ENCODE measurements at regions of chr2 and their contacts with region 1.

Region 1: DNA sequence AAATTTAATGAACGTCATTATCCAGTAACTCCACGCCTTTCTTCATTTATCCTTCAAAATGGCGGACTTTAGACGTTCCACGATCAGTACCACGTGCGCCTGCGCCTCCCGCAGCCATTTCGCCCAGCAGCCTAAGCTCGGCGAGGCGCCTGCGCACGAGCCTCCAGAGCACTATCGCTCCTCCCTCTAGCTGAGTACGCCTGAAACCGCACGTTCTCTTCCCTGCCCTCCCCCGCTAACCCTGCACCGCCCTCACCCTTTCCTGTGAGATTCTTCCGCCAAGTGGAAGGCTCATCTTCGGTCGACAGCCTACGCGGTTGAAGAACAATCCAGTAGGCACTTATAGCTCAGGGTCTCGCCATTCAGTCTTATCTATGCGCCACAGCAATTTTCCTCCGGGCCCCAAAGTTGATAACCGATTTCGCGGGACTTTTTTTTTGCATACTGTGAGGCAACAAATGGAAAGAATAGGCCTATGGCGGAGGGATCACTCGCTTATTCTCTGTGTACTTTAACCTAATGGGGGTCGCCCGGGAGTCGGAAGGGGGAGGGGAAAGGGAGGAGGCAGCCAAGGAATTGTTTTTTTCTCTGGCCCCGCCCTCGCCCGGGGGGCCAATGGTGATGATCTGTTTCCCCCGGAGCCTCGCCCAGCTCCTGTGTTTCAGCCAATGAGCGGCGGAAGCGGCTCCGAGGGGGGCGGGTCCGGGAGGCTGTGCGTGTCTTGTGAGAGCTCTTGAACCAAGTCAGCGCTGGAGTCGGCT is at the start of gene KDM3A:
- DNase-seq: peak; percentile 99
- ATAC-seq: peak; percentile 81
- H3K4me3 ChIP-seq: peak within 1 kb of the TSS; percentile 81 to 98 (median 84)
- H3K4me3 Mint-ChIP-seq: peak within 1 kb of the TSS; percentile 97
- H3K27ac ChIP-seq: peak within 1 kb of the TSS; percentile 89 to 92
- H3K27ac Mint-ChIP-seq: peak within 1 kb of the TSS; percentile 99
- H3K4me1 ChIP-seq: peaks cover 23 to 26% of the 10 kb centered on the region in 2 donors
- H3K4me1 Mint-ChIP-seq: peaks cover 41% of the 10 kb centered on the region
- H3K27me3 ChIP-seq: peaks cover 0 to 3% (median 0%) of the 10 kb centered on the region in 4 experiments
- H3K27me3 Mint-ChIP-seq: peaks cover 7% of the 10 kb centered on the region
- CTCF ChIP-seq: no peak
- total RNA-seq, gene KDM3A: 99.2 and 107 TPM in 2 replicates

Region 2: DNA sequence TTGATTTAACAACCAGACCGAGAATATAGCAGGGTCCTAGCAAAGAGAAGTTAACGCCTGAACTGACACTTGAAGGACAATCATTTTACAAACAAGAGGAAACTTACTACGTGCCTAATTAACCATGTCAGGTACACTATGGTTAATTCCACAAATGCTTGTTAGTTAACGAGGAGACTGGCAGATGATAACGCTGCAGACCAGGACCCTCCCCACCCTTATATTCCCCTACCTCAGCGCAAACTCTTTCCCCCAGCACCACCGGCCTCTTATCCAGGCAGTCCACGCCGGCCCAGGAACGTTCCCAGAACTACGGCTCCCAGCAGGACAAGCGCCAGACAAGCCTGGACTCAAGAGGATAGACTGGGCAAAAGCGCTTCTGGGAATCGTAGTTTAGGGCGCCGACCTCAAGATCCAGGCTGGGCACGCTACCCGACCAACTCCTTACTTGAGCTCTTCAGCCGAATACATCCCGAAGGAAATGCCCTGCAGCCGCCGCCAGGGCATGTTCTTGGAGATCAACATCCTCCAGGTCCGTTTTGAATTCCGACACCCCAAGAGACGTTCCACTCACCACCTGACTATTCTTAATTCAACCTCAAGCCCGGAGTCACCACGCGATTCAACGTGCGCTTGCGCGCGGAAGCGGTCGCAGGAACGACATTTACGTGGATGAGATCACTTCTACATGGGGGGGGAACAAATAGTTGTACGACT is 335.4 kb before region 1 on chr2 and contains the start of gene POLR1A:
- CTCF ChIA-PET with region 1: interaction called, 4 read pairs
- POLR2A ChIA-PET with region 1: interaction called, 5 read pairs
- intact Hi-C with region 1: loop called (anchors 2 kb)
- DNase-seq: peak; percentile 95
- ATAC-seq: peak; percentile 76
- H3K4me3 ChIP-seq: peak within 1 kb of the TSS; percentile 88 to 96 (median 89)
- H3K4me3 Mint-ChIP-seq: peak within 1 kb of the TSS; percentile 93
- H3K27ac ChIP-seq: peak within 1 kb of the TSS; percentile 74 to 92
- H3K27ac Mint-ChIP-seq: peak within 1 kb of the TSS; percentile 95
- H3K4me1 ChIP-seq: peaks cover 16 to 22% of the 10 kb centered on the region in 2 donors
- H3K4me1 Mint-ChIP-seq: peaks cover 50% of the 10 kb centered on the region
- H3K27me3 ChIP-seq: no peaks in the 10 kb centered on the region
- H3K27me3 Mint-ChIP-seq: no peaks in the 10 kb centered on the region
- CTCF ChIP-seq: no peak
- total RNA-seq, gene POLR1A: 32.7 and 36.8 TPM in 2 replicates

Region 3: GRCh38 chr2:86195055-86195807 is 245.6 kb before region 1 on chr2 and contains the start of gene IMMT:
- CTCF ChIA-PET with region 1: interaction called, 3 read pairs
- POLR2A ChIA-PET with region 1: interaction called, 3 read pairs
- intact Hi-C with region 1: loop called (anchors 2 kb)
- DNase-seq: peak; percentile 94
- ATAC-seq: peak; percentile 90
- H3K4me3 ChIP-seq: peak within 1 kb of the TSS; percentile 76 to 99 (median 91)
- H3K4me3 Mint-ChIP-seq: peak within 1 kb of the TSS; percentile 94
- H3K27ac ChIP-seq: peak within 1 kb of the TSS; percentile 90 to 94
- H3K27ac Mint-ChIP-seq: peak within 1 kb of the TSS; percentile 89
- H3K4me1 ChIP-seq: peaks cover 25 to 28% of the 10 kb centered on the region in 2 donors
- H3K4me1 Mint-ChIP-seq: peaks cover 49% of the 10 kb centered on the region
- H3K27me3 ChIP-seq: no peaks in the 10 kb centered on the region
- H3K27me3 Mint-ChIP-seq: no peaks in the 10 kb centered on the region
- CTCF ChIP-seq: no peak
- total RNA-seq, gene IMMT: 63.5 and 66.0 TPM in 2 replicates

Region 4: DNA sequence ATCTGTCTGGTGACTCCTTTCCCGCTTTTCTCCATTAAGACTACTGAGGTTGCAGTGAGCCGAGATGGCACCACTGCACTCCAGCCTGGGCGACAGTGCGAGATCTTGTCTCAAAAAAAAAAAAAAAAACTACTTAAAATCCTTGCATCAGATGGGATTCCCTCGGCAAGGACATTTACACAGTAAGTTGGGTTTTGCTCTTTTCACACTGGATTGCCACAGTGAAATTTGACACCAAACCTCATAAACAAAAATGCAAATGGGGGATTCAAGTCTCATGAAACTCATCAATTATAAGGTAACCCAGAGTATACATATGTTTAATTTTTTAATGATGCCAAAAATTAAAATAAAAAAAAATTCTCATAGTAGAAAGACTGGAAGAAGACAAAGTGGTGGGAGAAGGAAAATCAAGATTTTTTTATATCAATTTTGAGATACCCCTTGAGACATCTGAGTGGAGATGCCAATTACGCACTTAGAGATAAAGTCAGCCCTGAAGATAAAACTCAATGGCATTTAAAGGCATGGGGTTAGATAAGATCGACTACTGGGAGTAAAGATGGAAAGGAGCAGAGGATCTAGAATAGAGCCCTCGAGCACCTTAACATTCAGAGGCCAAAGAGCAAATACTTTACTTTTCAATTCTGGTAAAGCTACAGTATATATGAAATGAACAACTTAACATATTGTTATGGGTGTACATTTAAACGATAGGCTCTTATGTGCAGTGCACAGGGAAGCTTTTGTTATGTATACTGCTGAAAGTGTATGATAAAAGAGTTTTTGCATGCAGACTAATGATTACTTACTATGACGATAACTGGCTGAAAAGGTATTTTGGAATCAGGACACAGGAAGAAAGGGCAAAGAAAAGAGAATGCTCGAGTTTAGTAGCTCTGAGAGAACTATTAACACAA is 84.9 kb after region 1 on chr2:
- CTCF ChIA-PET with region 1: no interaction called
- POLR2A ChIA-PET with region 1: no interaction called
- intact Hi-C with region 1: no loop called
- DNase-seq: no peak
- ATAC-seq: no peak
- H3K4me3 ChIP-seq: no peak overlapping the region
- H3K4me3 Mint-ChIP-seq: no peak overlapping the region
- H3K27ac ChIP-seq: no peak overlapping the region
- H3K27ac Mint-ChIP-seq: peak overlapping the region; percentile 13
- H3K4me1 ChIP-seq: no peaks in the 10 kb centered on the region
- H3K4me1 Mint-ChIP-seq: no peaks in the 10 kb centered on the region
- H3K27me3 ChIP-seq: no peaks in the 10 kb centered on the region
- H3K27me3 Mint-ChIP-seq: no peaks in the 10 kb centered on the region
- CTCF ChIP-seq: no peak

Region 5: GRCh38 chr2:86562922-86563649 is 122.3 kb after region 1 on chr2 and contains the start of gene CHMP3:
- CTCF ChIA-PET with region 1: interaction called, 4 read pairs
- POLR2A ChIA-PET with region 1: interaction called, 11 read pairs
- intact Hi-C with region 1: loop called (anchors 1 kb)
- DNase-seq: peak; percentile 99
- ATAC-seq: peak; percentile 86
- H3K4me3 ChIP-seq: peak within 1 kb of the TSS; percentile 87 to 100 (median 95)
- H3K4me3 Mint-ChIP-seq: peak within 1 kb of the TSS; percentile 93
- H3K27ac ChIP-seq: peak within 1 kb of the TSS; percentile 99 to 100
- H3K27ac Mint-ChIP-seq: peak within 1 kb of the TSS; percentile 98
- H3K4me1 ChIP-seq: peaks cover 20 to 26% of the 10 kb centered on the region in 2 donors
- H3K4me1 Mint-ChIP-seq: peaks cover 41% of the 10 kb centered on the region
- H3K27me3 ChIP-seq: no peaks in the 10 kb centered on the region
- H3K27me3 Mint-ChIP-seq: peaks cover 3% of the 10 kb centered on the region
- CTCF ChIP-seq: no peak
- total RNA-seq, gene CHMP3: 61.4 and 72.5 TPM in 2 replicates

Region 6: DNA sequence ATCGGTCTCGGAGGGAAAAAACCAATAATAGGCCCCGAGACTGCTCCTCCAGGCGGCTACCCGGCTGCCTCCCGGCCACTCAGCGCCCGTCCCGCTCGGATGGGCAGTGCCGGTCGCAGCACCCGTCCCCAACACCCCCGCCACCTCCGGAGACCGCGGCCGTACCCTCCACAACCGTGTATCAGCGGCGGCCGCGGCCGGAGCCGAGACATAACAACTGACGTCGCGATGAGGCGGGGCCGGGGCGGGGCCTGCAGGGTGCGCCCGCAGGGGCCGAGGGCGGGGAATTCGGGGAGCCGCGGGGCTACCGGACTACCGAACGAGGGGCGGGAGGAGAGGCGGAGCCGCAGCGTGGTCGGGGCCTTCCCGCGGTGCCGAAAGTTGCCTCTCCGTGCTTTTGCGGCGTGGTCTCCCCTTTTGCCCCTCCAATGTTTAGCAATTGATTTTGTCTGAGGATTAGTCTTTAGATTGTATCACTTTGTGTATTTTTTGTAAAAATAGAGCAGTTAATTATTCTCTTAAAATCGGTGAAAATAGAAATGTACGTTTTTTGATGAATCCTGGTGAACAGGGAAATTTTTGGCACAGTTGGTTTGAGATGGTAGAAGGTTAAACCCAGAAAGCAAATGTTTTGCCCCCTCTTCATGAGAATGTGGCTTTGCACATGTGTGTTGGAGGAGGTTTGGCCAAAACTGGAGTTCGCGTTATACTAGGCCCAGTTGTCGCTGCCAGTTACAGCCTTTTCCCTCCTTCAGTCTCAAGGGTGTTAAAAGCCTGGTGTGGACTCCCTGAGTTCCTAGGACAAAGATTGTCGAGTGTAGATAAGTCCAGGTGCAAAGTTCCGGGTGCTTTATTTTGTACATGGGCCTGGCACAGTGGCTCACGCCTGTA is 183.1 kb after region 1 on chr2 and contains the start of gene RNF103:
- CTCF ChIA-PET with region 1: no interaction called
- POLR2A ChIA-PET with region 1: interaction called, 6 read pairs
- intact Hi-C with region 1: loop called (anchors 1 kb)
- DNase-seq: peak; percentile 97
- ATAC-seq: peak; percentile 82
- H3K4me3 ChIP-seq: peak within 1 kb of the TSS; percentile 71 to 87 (median 78)
- H3K4me3 Mint-ChIP-seq: peak within 1 kb of the TSS; percentile 94
- H3K27ac ChIP-seq: peak within 1 kb of the TSS; percentile 93 to 94
- H3K27ac Mint-ChIP-seq: peak within 1 kb of the TSS; percentile 97
- H3K4me1 ChIP-seq: peaks cover 17% of the 10 kb centered on the region in 2 donors
- H3K4me1 Mint-ChIP-seq: peaks cover 35% of the 10 kb centered on the region
- H3K27me3 ChIP-seq: no peaks in the 10 kb centered on the region
- H3K27me3 Mint-ChIP-seq: no peaks in the 10 kb centered on the region
- CTCF ChIP-seq: no peak
- total RNA-seq, gene RNF103: 36.1 and 37.2 TPM in 2 replicates

Region 7: DNA sequence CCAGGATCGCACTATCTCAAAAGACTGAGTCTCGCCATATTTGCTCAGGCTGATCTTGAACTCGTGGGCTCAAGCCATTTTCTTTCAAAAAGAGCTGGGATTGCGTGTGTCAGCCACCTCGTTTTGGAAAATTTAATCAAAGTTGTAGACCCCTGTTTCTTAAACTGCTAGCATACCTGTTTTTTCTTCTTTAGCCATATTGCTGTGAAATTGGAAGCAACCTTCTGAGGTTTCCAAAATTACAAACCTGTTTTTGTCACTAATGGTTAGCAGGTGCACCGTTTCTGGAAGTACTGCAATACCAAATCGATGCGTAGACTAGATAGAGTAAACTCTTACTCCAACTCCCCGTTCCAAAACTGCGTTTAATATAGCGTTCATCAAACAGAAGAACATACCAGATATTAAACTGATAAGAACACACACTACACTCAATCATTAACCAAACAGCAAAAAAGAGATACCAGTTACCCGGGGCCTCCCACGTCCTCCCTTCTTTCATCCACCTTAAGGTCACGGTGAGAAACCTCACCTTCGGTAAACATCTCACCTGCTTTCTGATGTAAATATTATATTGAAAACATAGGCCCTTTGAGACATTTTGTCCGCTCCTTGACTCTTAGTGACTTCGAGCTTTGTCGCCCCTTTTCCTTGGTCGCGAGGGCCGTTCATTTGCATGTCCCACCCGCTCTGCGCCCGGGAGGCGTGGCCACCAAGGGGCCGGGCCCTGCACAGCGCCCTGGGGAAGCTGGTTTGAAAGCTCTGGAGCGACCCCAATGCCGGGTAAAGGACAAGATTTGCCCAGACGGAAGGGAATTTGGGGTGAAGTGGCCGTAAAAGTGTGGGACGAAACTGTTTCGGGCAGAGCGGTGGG is 1575.5 kb after region 1 on chr2 and contains the start of gene RNU2-63P:
- CTCF ChIA-PET with region 1: no interaction called
- POLR2A ChIA-PET with region 1: no interaction called
- intact Hi-C with region 1: loop called (anchors 5 kb)
- DNase-seq: peak; percentile 94
- ATAC-seq: peak; percentile 84
- H3K4me3 ChIP-seq: peak within 1 kb of the TSS; percentile 39 to 95 (median 91)
- H3K4me3 Mint-ChIP-seq: peak within 1 kb of the TSS; percentile 100
- H3K27ac ChIP-seq: peak within 1 kb of the TSS; percentile 98 to 99
- H3K27ac Mint-ChIP-seq: peak within 1 kb of the TSS; percentile 98
- H3K4me1 ChIP-seq: peaks cover 6 to 15% of the 10 kb centered on the region in 2 donors
- H3K4me1 Mint-ChIP-seq: peaks cover 25% of the 10 kb centered on the region
- H3K27me3 ChIP-seq: no peaks in the 10 kb centered on the region
- H3K27me3 Mint-ChIP-seq: no peaks in the 10 kb centered on the region
- CTCF ChIP-seq: no peak
- total RNA-seq, gene RNU2-63P: 8.9 and 9.3 TPM in 2 replicates

Measured in B cell (primary cell).